Natural killer cell (primary cell): ENCODE measurements at regions of chr12 and their contacts with region 1.

Region 1: DNA sequence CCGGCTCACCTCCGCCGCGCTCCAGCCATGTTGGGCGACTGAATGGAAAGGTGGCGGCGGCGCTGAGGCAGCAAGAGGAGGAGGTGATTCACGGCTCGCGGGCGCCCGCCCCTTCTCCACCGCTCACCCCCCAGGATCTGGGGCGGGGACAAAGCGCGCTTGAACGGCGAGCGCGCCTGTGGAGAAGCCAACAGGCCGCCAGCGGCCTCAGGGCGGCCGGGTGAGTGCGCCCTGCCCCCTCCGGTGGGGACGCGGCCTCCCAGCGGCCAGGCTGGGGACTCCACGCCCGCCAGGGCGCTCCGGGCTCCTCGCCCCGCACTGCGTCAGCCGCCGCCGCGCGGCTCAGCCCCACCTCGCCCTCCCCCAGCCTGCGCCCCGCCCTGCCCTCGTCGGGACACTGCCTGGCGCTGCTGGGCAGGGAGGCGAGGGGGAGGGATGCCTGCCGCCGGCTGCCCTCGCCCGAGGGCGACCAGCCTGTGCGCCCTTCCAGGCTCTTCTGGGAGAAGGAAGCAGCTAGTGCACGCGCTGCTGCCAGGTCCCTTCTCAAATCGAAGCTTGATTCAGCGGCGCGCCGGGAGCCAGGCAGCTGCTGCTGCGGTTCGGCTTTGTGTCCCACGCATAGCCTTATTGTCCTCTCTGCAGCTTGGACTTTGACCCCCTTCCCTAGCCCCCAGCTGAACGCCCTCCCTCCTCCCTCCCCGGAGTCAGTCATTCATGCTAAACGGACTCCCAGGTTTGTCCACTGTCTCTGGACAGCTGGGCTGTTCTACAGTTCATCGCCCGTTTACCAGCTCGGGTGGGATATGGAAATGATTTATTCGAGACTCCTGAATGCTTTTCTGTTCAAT is at the start of gene KIF21A:
- DNase-seq: peak; percentile 88 to 94
- ATAC-seq: peak; percentile 89 to 97 (median 91)
- H3K4me3 ChIP-seq: peak within 1 kb of the TSS; percentile 72
- H3K4me3 Mint-ChIP-seq: peak within 1 kb of the TSS; percentile 98
- H3K27ac ChIP-seq: peak within 1 kb of the TSS; percentile 75
- H3K27ac Mint-ChIP-seq: peak within 1 kb of the TSS; percentile 85 to 93
- H3K4me1 ChIP-seq: peaks cover 10% of the 10 kb centered on the region
- H3K4me1 Mint-ChIP-seq: peaks cover 20 to 25% of the 10 kb centered on the region in 2 donors
- H3K27me3 ChIP-seq: no peaks in the 10 kb centered on the region
- H3K27me3 Mint-ChIP-seq: peaks cover 0 to 4% of the 10 kb centered on the region in 2 donors
- CTCF ChIP-seq: peak; percentile 63
- total RNA-seq, gene KIF21A: 11.5 to 31.6 (median 18.0) TPM

Region 2: DNA sequence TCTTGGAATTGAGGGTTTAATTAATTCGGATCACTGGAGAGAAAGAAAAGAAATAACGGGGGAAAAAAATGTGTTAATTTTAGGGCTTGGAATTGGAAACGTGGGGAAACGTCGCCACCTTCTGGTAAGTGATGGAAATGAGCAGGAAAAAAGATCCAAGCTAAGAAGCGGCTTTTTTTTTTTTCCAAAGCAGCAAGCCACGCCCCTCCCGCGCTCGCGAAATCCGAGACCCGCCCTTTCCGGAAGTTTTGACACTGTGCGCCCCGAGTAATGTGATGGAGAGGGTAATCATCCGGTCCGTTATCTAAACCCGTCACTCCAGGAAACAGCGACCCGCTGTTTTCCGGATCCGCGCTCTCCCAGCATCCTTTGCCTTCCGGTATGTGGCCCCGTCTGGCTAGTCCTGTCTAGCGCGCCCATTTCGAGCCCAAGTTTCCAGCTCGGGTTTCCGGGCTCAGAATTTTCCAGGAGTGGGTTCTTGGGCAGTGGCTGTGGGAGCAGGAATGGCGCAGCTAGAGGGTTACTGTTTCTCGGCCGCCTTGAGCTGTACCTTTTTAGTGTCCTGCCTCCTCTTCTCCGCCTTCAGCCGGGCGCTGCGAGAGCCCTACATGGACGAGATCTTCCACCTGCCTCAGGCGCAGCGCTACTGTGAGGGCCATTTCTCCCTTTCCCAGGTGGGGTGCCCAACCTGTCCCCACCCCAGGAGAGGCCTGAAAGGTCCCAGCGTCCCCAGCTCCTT is 1126.7 kb before region 1 on chr12 and contains the start of gene ALG10B:
- intact Hi-C with region 1: loop called (anchors 5 kb)
- DNase-seq: peak; percentile 88 to 98
- ATAC-seq: peak; percentile 96 to 98 (median 98)
- H3K4me3 ChIP-seq: peak within 1 kb of the TSS; percentile 94
- H3K4me3 Mint-ChIP-seq: peak within 1 kb of the TSS; percentile 93
- H3K27ac ChIP-seq: peak within 1 kb of the TSS; percentile 95
- H3K27ac Mint-ChIP-seq: peak within 1 kb of the TSS; percentile 94 to 95
- H3K4me1 ChIP-seq: peaks cover 7% of the 10 kb centered on the region
- H3K4me1 Mint-ChIP-seq: peaks cover 22 to 26% of the 10 kb centered on the region in 2 donors
- H3K27me3 ChIP-seq: no peaks in the 10 kb centered on the region
- H3K27me3 Mint-ChIP-seq: no peaks in the 10 kb centered on the region
- CTCF ChIP-seq: peak; percentile 59
- total RNA-seq, gene ALG10B: 7.5 to 11.6 (median 8.0) TPM

Region 3: GRCh38 chr12:38961683-38962082 is 481.6 kb before region 1 on chr12:
- intact Hi-C with region 1: no loop called
- DNase-seq: no peak
- ATAC-seq: no peak
- H3K4me3 ChIP-seq: no peak overlapping the region
- H3K4me3 Mint-ChIP-seq: no peak overlapping the region
- H3K27ac ChIP-seq: no peak overlapping the region
- H3K27ac Mint-ChIP-seq: no peak overlapping the region
- H3K4me1 ChIP-seq: no peaks in the 10 kb centered on the region
- H3K4me1 Mint-ChIP-seq: no peaks in the 10 kb centered on the region
- H3K27me3 ChIP-seq: no peaks in the 10 kb centered on the region
- H3K27me3 Mint-ChIP-seq: no peaks in the 10 kb centered on the region
- CTCF ChIP-seq: no peak

Region 4: DNA sequence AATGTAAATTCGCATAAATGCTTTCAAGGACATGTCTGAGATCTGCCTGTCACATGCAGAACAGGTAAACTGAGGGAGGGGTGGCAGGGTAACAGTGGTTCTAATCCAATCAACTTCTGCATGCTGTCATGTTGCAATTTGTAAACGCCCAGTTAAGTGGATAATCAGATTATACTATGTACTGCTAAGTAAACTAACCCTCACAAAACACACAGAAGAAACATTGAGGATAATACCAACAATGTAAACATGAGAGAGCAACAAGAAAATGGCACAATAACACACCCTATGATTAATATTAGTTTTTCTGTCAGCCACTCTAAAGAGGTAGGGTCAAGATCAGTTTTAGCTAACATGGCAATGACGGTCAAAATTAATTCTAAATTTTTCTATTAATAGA is 124.1 kb before region 1 on chr12:
- intact Hi-C with region 1: loop called (anchors 1 kb)
- DNase-seq: no peak
- ATAC-seq: no peak
- H3K4me3 ChIP-seq: no peak overlapping the region
- H3K4me3 Mint-ChIP-seq: no peak overlapping the region
- H3K27ac ChIP-seq: no peak overlapping the region
- H3K27ac Mint-ChIP-seq: no peak overlapping the region
- H3K4me1 ChIP-seq: no peaks in the 10 kb centered on the region
- H3K4me1 Mint-ChIP-seq: peaks cover 0 to 5% of the 10 kb centered on the region in 2 donors
- H3K27me3 ChIP-seq: no peaks in the 10 kb centered on the region
- H3K27me3 Mint-ChIP-seq: no peaks in the 10 kb centered on the region
- CTCF ChIP-seq: no peak

Region 5: GRCh38 chr12:39331539-39332261 is 111.6 kb before region 1 on chr12:
- intact Hi-C with region 1: loop called (anchors 1 kb)
- DNase-seq: peak in 1 of 2 donors; percentile 43
- ATAC-seq: peak; percentile 71 to 80 (median 78)
- H3K4me3 ChIP-seq: peak overlapping the region; percentile 8
- H3K4me3 Mint-ChIP-seq: peak overlapping the region; percentile 80
- H3K27ac ChIP-seq: peak overlapping the region; percentile 64
- H3K27ac Mint-ChIP-seq: peak overlapping the region; percentile 86 to 90
- H3K4me1 ChIP-seq: peaks cover 7% of the 10 kb centered on the region
- H3K4me1 Mint-ChIP-seq: peaks cover 23 to 29% of the 10 kb centered on the region in 2 donors
- H3K27me3 ChIP-seq: no peaks in the 10 kb centered on the region
- H3K27me3 Mint-ChIP-seq: no peaks in the 10 kb centered on the region
- CTCF ChIP-seq: no peak

Region 6: DNA sequence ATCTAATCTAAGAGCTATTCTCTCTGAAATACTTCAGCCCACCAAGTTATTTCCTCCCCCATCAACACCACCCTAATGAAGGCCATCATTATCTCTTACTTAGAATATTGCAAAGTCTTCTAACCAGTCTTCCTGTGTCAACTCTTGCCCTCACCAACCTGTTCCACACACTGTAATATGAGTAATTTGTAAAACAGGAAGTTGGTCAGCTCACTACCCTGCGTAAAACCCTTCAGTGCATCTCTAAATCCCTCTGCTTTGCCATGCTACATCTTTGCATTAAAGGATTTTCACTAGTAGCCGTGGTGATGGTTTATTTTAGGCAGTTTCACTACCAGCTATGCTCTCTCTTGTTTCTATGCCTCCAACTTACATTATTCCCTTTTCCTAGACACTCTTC is 70.4 kb before region 1 on chr12:
- intact Hi-C with region 1: loop called (anchors 1 kb)
- DNase-seq: peak; percentile 17 to 55
- ATAC-seq: peak; percentile 94 to 98 (median 98)
- H3K4me3 ChIP-seq: no peak overlapping the region
- H3K4me3 Mint-ChIP-seq: peak overlapping the region; percentile 86
- H3K27ac ChIP-seq: peak overlapping the region; percentile 71
- H3K27ac Mint-ChIP-seq: peak overlapping the region; percentile 85 to 91
- H3K4me1 ChIP-seq: peaks cover 10% of the 10 kb centered on the region
- H3K4me1 Mint-ChIP-seq: peaks cover 51 to 62% of the 10 kb centered on the region in 2 donors
- H3K27me3 ChIP-seq: no peaks in the 10 kb centered on the region
- H3K27me3 Mint-ChIP-seq: no peaks in the 10 kb centered on the region
- CTCF ChIP-seq: no peak

Region 7: DNA sequence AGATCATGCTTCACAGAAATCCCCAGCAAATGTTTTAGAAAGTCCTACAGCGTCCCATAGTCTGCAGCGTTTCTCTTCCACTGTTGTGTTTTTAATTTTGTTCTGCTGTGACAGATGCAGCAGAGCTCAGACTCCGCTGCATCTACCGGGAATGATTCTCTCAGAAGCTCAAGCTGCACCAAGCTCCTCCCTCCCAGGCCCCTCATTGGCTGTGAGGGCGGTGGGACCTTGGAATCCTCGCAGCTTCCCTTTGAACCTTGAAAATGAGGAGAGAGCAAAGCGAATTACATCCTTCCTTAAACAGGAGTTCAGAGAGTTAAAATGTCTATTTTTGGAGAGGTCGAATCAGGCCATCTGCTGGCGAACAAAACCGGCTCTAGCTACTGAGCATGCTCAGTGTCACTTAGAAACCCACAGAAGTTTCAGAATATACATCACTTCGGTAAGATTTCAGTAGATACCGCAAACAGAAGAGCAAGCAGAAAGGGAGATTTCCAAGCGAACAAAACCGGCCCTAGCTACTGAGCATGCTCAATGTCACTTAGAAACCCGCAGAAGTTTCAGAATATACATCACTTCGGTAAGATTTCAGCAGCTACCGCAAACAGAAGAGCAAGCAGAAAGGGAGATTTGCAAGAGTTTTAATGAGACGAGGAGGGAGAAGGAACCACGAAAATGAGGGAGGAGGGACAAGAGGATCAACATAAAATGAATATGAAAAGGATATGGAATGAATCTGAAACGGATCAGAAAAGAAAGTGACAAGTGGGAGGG is 176.5 kb after region 1 on chr12 and contains the start of gene ABCD2:
- intact Hi-C with region 1: loop called (anchors 1 kb)
- DNase-seq: peak; percentile 38 to 94
- ATAC-seq: peak; percentile 89 to 93 (median 90)
- H3K4me3 ChIP-seq: peak within 1 kb of the TSS; percentile 60
- H3K4me3 Mint-ChIP-seq: no peak within 1 kb of the TSS
- H3K27ac ChIP-seq: peak within 1 kb of the TSS; percentile 85
- H3K27ac Mint-ChIP-seq: no peak within 1 kb of the TSS
- H3K4me1 ChIP-seq: peaks cover 14% of the 10 kb centered on the region
- H3K4me1 Mint-ChIP-seq: peaks cover 0 to 5% of the 10 kb centered on the region in 2 donors
- H3K27me3 ChIP-seq: no peaks in the 10 kb centered on the region
- H3K27me3 Mint-ChIP-seq: no peaks in the 10 kb centered on the region
- CTCF ChIP-seq: no peak
- total RNA-seq, gene ABCD2: 0.35 to 2.4 (median 0.75) TPM